Activated T-helper 2 cell treated with anti-CD3 and anti-CD28 coated beads, Interferon-gamma antibody, Interleukin-2, Interleukin-4, amounts not matched to agents 10 μg/mL and 5 μg/mL and 100 μg/mL, durations not matched to agents 14 hours and 24 hours and 36 hours (primary cell): ENCODE measurements at regions of chr1 and their contacts with region 1.

Region 1: GRCh38 chr1:246724016-246724730 is at the start of gene SCCPDH:
- DNase-seq: peak; percentile 63
- H3K4me3 Mint-ChIP-seq: peak within 1 kb of the TSS; percentile 92
- H3K27ac Mint-ChIP-seq: peak within 1 kb of the TSS; percentile 73
- H3K4me1 Mint-ChIP-seq: peaks cover 9% of the 10 kb centered on the region
- H3K27me3 Mint-ChIP-seq: no peaks in the 10 kb centered on the region
- total RNA-seq, gene SCCPDH: 34.1 and 34.3 TPM in 2 replicates

Region 2: DNA sequence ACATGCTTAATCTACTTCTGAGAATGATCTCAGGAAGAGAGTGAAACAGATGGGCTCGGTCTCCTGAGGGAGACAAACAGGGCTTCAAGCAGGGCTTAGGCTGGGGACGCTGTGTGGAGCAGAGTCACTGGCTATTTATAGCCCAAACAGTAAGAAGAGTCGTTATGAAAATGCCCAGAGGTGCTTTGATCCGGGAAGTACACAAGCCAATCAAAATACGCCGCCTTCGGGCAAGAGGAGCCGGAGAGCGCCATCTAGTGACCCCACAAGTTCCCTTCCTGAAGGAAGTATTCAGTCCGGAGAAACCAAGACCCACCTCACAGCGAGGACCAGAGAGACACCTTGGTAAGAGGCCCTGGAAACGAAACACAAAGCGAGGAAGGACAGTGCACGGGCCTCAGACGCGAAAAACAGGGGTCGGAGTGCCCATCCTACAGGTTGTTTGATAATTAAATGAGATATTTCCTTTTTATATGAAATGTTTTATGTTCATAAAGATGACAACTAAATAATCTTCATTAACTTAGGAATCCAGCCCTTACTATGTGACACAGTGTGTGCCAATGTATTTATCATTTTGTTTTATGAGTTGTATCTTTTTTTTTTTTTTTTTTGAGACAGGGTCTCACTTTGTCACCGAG is 25.0 kb before region 1 on chr1:
- intact Hi-C with region 1: loop called (anchors 2 kb)
- DNase-seq: peak; percentile 71
- H3K4me3 Mint-ChIP-seq: no peak overlapping the region
- H3K27ac Mint-ChIP-seq: no peak overlapping the region
- H3K4me1 Mint-ChIP-seq: peaks cover 9% of the 10 kb centered on the region
- H3K27me3 Mint-ChIP-seq: peaks cover 5% of the 10 kb centered on the region